Ascending aorta (tissue), 2 donors: ENCODE measurements at regions of chr1 and their contacts with region 1.

Region 1: GRCh38 chr1:61293986-61294504 is 211.7 kb downstream of the NFIA start:
- DNase-seq: no peak
- H3K4me3 ChIP-seq: no peak overlapping the region
- H3K27ac ChIP-seq: peak overlapping the region in 1 of 2 donors; percentile 48
- H3K4me1 ChIP-seq: peaks cover 11 to 56% of the 10 kb centered on the region in 2 donors
- H3K27me3 ChIP-seq: no peaks in the 10 kb centered on the region
- CTCF ChIP-seq: no peak

Region 2: DNA sequence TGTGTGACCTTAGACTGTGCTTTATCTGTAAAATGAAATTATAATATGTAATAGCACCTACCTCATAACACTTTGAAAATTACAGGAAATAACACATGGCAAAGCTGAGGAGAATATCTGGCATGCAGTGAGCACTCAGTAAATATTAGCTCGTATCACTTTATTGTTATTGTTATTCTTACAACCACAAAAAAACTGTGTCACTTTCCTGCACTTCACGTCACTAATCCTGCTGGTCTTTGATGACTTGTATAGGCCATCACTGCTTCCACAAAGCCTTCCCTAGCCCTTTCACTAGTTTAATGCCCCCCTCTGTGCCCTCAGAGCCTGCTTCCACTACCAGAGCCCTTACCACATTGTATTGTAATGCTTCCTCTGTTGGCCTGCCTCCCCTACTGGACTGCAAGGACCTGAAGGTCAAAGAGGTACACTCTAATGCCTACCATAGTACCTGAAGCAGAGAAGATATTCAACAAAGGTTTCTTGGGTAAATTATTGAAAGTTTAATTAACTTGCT is 19.9 kb after region 1 on chr1:
- intact Hi-C with region 1: loop called (anchors 2 kb)
- DNase-seq: no peak
- H3K4me3 ChIP-seq: no peak overlapping the region
- H3K27ac ChIP-seq: peak overlapping the region; percentile 11 to 41
- H3K4me1 ChIP-seq: peaks cover 0 to 10% of the 10 kb centered on the region in 2 donors
- H3K27me3 ChIP-seq: no peaks in the 10 kb centered on the region
- CTCF ChIP-seq: no peak